Activated CD4-positive, alpha-beta T cell treated with anti-CD3 and anti-CD28 coated beads for 36 hours (primary cell): ENCODE measurements at regions of chr3 and their contacts with region 1.

Region 1: DNA sequence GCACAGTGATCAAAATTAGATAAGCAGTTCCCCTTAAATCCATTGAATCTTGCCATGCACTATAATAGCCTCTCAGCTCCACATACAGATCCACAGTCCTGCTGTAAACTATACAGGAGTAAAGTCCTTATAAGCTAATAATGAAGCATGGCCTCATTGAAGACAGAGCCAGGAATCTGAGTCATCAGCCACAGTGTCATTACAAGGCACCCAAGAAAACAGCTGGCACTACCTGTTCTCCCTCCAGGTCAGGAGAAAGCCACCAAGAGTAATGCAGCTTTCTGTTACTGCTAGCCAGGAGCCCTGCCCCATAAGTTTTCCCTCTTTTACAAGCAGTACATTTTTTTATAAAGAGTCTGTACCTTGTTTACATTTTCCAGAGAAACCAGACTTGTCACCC is 27.3 kb downstream of the WDR49 start:
- DNase-seq: no peak
- ATAC-seq: no peak
- H3K4me3 Mint-ChIP-seq: no peak overlapping the region
- H3K27ac Mint-ChIP-seq: no peak overlapping the region
- H3K4me1 Mint-ChIP-seq: no peaks in the 10 kb centered on the region
- H3K27me3 Mint-ChIP-seq: peaks cover 5% of the 10 kb centered on the region

Region 2: GRCh38 chr3:167609156-167609555 is 17.3 kb before region 1 on chr3:
- CTCF ChIA-PET with region 1: no interaction called
- POLR2A ChIA-PET with region 1: no interaction called
- intact Hi-C with region 1: loop called in 1 of 2 experiments (anchors 1 kb)
- DNase-seq: no peak
- ATAC-seq: no peak
- H3K4me3 Mint-ChIP-seq: no peak overlapping the region
- H3K27ac Mint-ChIP-seq: no peak overlapping the region
- H3K4me1 Mint-ChIP-seq: no peaks in the 10 kb centered on the region
- H3K27me3 Mint-ChIP-seq: peaks cover 4% of the 10 kb centered on the region